HEK293 (cell line): ENCODE measurements at regions of chr2 and their contacts with region 1.

Region 1: GRCh38 chr2:20135631-20136050 is 84.2 kb upstream of the LAPTM4A start:
- H3K4me3 ChIP-seq: no peak overlapping the region
- H3K27ac ChIP-seq: no peak overlapping the region
- H3K4me1 ChIP-seq: no peaks in the 10 kb centered on the region
- CTCF ChIP-seq: peak; percentile 80

Region 2: DNA sequence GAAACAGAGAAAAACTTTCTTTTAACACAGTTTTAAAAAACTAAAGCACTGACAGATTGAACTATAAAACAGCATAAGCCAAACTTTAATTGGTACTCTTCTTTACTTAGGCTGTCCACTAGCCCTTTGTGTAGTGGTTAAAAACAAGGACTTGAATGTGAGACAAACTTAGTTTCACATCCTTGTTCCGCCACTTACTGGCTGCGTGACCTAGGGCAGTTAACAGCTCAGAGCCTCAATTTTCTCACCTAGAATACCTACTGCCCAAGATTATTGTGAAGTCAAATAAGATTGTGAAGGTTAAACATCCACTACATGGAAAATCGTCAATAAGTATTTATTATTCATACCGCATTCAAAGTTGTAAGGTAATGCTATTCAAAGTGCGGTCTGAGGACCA is 147.7 kb before region 1 on chr2:
- CTCF ChIA-PET with region 1: no interaction called
- POLR2A ChIA-PET with region 1: no interaction called
- H3K4me3 ChIP-seq: no peak overlapping the region
- H3K27ac ChIP-seq: no peak overlapping the region
- H3K4me1 ChIP-seq: no peaks in the 10 kb centered on the region
- CTCF ChIP-seq: no peak

Region 3: GRCh38 chr2:20125616-20126015 is 10.0 kb before region 1 on chr2:
- CTCF ChIA-PET with region 1: interaction called, 11 read pairs
- POLR2A ChIA-PET with region 1: no interaction called
- H3K4me3 ChIP-seq: no peak overlapping the region
- H3K27ac ChIP-seq: no peak overlapping the region
- H3K4me1 ChIP-seq: no peaks in the 10 kb centered on the region
- CTCF ChIP-seq: no peak

Region 4: DNA sequence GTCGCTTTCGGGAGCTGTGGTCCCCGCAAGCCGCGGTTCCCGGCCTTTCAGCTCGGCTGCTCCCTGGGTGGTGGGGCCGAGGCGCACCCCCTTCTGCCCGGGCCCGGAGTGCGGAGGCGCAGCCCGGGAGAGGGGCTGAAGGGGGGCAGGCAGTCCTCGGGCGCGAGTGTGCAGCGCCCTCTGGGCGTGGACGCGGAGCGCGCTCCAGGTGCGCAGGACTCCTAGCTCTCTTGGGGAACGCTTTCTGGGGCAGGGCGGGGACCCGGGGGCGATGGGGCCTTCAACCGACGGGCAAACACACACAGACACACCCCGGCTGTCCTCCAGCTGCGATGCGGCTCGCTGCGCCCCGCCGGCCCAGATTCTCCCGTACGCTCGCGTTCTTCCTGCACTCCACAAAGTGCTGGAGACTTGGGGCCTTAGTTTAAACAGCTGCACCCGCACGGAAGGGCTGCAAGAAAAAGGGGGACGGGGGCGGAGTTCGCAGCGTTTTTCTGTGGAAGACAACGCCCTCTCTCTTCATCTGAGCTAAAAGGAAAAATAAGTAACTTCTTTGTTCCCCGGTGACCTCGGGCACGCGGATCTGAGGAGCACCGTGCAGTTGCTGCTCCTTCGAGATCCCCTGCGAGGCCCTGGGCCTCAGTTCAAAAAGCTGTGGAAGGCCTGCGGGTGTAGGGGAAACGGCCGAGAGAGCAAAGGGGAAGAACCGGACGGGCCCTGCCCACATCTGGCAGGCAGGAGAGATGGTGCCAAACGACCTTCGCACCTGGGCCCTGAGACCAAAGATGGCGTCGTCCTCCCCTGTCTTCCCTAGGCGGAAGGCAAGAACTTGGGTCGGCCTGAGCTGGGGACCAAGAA is 89.9 kb after region 1 on chr2:
- CTCF ChIA-PET with region 1: interaction called, 24 read pairs
- POLR2A ChIA-PET with region 1: interaction called, 6 read pairs
- H3K4me3 ChIP-seq: peak overlapping the region; percentile 60
- H3K27ac ChIP-seq: peak overlapping the region; percentile 31; the same call in 1 of the 2 replicates
- H3K4me1 ChIP-seq: peaks cover 14% of the 10 kb centered on the region
- CTCF ChIP-seq: peak; percentile 95

Region 5: DNA sequence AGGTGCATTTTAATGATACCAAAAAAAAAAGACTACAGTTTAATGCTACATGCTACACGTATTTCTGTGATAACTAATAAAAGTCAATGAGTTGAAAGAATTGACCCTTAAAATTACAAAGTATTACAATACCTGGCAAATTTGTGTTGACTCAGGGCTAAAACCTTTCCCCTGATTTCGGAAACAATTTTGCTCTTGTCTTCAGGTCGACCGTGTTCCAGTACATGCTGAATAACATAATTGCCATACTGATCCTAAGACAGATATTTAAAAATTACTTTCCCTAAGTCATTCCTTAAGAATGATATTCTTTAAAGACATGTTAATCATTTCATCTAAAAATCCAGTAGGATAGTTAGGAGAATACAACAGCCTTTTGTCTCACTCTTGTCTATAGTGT is 119.1 kb after region 1 on chr2:
- CTCF ChIA-PET with region 1: no interaction called
- POLR2A ChIA-PET with region 1: no interaction called
- H3K4me3 ChIP-seq: no peak overlapping the region
- H3K27ac ChIP-seq: no peak overlapping the region
- H3K4me1 ChIP-seq: no peaks in the 10 kb centered on the region
- CTCF ChIP-seq: no peak

Region 6: GRCh38 chr2:20282916-20283592 is 147.4 kb after region 1 on chr2:
- CTCF ChIA-PET with region 1: no interaction called
- POLR2A ChIA-PET with region 1: no interaction called
- H3K4me3 ChIP-seq: no peak overlapping the region
- H3K27ac ChIP-seq: no peak overlapping the region
- H3K4me1 ChIP-seq: no peaks in the 10 kb centered on the region
- CTCF ChIP-seq: no peak